WTC11 (cell line): ENCODE measurements at regions of chr2 and their contacts with region 1.

Region 1: GRCh38 chr2:1625208-1625937 is 118.9 kb downstream of the PXDN start:
- DNase-seq: peak; percentile 89
- ATAC-seq: peak; percentile 93
- H3K4me3 Mint-ChIP-seq: peak overlapping the region; percentile 60
- H3K27ac Mint-ChIP-seq: peak overlapping the region; percentile 100
- H3K4me1 Mint-ChIP-seq: peaks cover 50% of the 10 kb centered on the region
- H3K27me3 Mint-ChIP-seq: no peaks in the 10 kb centered on the region; the same call in 1 of the 2 replicates
- CTCF ChIP-seq: no peak

Region 2: DNA sequence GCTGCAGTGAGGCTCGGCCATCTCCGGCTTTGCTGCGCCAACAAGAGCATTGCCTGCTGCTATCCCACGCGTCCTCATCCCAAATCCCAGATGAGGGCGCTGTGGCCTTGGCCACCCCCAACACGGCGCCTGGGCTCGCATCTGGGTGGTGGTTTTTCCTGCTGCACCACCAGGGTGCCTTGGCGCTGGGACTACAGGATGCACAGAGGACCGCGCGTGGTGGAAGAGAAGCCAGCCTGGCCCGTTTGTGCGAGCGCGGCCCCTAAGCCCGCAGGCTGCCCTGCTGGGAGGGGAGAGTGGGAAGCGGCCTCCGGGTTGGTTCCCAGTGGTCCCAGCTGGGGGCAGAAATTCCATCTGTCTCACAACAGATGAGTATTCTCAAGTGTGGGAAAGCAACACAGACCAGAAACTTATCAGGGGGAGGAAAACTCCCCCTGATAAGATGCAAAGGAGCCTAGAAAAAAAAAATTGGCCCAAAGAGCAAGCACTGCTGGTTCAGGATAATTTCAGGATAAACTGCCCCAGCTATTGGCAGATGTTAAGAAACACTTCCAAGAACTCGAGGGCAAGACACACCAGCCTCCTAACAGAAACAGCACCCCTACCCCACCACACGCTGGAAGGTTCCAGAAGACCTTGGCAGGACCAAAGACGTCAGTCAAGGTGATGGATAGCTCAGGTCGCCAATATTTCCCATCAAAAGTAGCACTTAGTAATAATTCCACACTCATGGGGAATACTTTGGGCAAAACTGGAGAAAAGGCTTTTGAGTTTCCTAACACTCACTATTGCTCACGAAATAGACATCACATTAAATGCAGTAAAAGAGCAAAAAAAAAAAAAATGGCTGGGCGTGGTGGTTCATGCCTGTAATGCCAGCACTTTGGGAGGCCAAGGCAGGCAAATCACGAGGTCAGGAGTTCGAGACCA is 33.1 kb before region 1 on chr2:
- CTCF ChIA-PET with region 1: interaction called, 35 read pairs
- POLR2A ChIA-PET with region 1: interaction called, 4 read pairs
- DNase-seq: peak; percentile 80
- ATAC-seq: peak; percentile 81
- H3K4me3 Mint-ChIP-seq: no peak overlapping the region
- H3K27ac Mint-ChIP-seq: no peak overlapping the region; the same call in 1 of the 2 replicates
- H3K4me1 Mint-ChIP-seq: peaks cover 30% of the 10 kb centered on the region
- H3K27me3 Mint-ChIP-seq: no peaks in the 10 kb centered on the region
- CTCF ChIP-seq: peak; percentile 32; the same call in 1 of the 2 replicates

Region 3: GRCh38 chr2:1605102-1606045 is 20.0 kb before region 1 on chr2:
- CTCF ChIA-PET with region 1: interaction called, 12 read pairs
- POLR2A ChIA-PET with region 1: interaction called, 7 read pairs
- DNase-seq: peak; percentile 68
- ATAC-seq: peak; percentile 95
- H3K4me3 Mint-ChIP-seq: no peak overlapping the region
- H3K27ac Mint-ChIP-seq: no peak overlapping the region; the same call in 1 of the 2 replicates
- H3K4me1 Mint-ChIP-seq: peaks cover 3% of the 10 kb centered on the region
- H3K27me3 Mint-ChIP-seq: no peaks in the 10 kb centered on the region
- CTCF ChIP-seq: no peak

Region 4: GRCh38 chr2:1613731-1614354 is 11.5 kb before region 1 on chr2:
- CTCF ChIA-PET with region 1: interaction called, 7 read pairs
- POLR2A ChIA-PET with region 1: interaction called, 12 read pairs
- DNase-seq: no peak
- ATAC-seq: peak; percentile 47
- H3K4me3 Mint-ChIP-seq: no peak overlapping the region
- H3K27ac Mint-ChIP-seq: peak overlapping the region; percentile 57; the same call in 1 of the 2 replicates
- H3K4me1 Mint-ChIP-seq: peaks cover 54% of the 10 kb centered on the region
- H3K27me3 Mint-ChIP-seq: no peaks in the 10 kb centered on the region
- CTCF ChIP-seq: no peak

Region 5: GRCh38 chr2:1641523-1641922 is 16.1 kb after region 1 on chr2:
- CTCF ChIA-PET with region 1: interaction called, 4 read pairs
- POLR2A ChIA-PET with region 1: interaction called, 11 read pairs
- DNase-seq: no peak
- ATAC-seq: peak; percentile 51
- H3K4me3 Mint-ChIP-seq: no peak overlapping the region
- H3K27ac Mint-ChIP-seq: peak overlapping the region; percentile 74
- H3K4me1 Mint-ChIP-seq: peaks cover 26% of the 10 kb centered on the region
- H3K27me3 Mint-ChIP-seq: no peaks in the 10 kb centered on the region
- CTCF ChIP-seq: no peak